ENCODE measurements at regions of chr6 and their contacts with region 1.

Region 1: DNA sequence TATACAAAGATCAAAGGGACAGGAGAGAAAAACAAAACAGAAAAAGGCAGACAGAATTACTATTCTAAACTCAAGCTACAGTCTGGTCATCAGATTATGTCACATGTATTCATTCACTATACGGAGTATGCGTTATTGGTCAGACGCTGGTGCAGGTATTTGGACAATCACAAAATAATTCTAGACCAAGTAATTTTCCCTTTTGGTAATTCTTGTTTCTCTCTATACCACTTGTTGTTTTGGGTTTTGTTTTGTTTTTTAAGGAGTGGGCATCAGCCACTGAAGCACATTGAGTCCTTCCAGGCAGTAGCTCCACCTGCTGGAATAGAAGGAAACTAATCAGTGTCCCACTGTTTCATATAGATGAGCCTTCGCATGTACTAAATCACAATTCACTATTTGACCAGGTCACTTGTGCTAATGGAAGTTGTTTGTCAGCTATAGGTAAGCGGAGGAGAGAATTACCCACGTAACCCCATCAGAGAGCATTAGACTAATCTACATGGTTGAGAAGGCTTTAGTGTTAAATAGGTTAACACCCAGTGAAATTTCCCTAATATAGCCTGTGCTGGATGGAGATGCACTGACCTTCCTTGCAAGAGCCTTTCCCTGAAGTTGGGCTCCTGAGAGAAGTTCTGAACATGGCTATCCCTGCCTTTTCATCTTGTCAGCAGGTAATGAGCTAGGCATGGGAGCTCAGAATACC is 77.9 kb downstream of the TNFAIP3 start:
- DNase-seq: peak; percentile 34
- H3K4me3 ChIP-seq: no peak overlapping the region
- H3K27ac ChIP-seq: no peak overlapping the region
- H3K4me1 ChIP-seq: peaks cover 12% of the 10 kb centered on the region
- H3K27me3 ChIP-seq: no peaks in the 10 kb centered on the region
- CTCF ChIP-seq: peak; percentile 68 to 81

Region 2: GRCh38 chr6:137707590-137708360 is 237.2 kb before region 1 on chr6:
- CTCF ChIA-PET with region 1: interaction called, 4 read pairs
- dilution Hi-C with region 1: no loop called
- in situ Hi-C with region 1: no loop called
- intact Hi-C with region 1: loop called (anchors 1 kb)
- DNase-seq: peak; percentile 92
- H3K4me3 ChIP-seq: no peak overlapping the region
- H3K27ac ChIP-seq: peak overlapping the region; percentile 64
- H3K4me1 ChIP-seq: peaks cover 7% of the 10 kb centered on the region
- H3K27me3 ChIP-seq: no peaks in the 10 kb centered on the region
- CTCF ChIP-seq: peak; percentile 65 to 75

Region 3: GRCh38 chr6:137845455-137845854 is 99.5 kb before region 1 on chr6:
- CTCF ChIA-PET with region 1: no interaction called
- dilution Hi-C with region 1: no loop called
- in situ Hi-C with region 1: no loop called
- intact Hi-C with region 1: loop called (anchors 1 kb)
- DNase-seq: no peak
- H3K4me3 ChIP-seq: no peak overlapping the region
- H3K27ac ChIP-seq: no peak overlapping the region
- H3K4me1 ChIP-seq: peaks cover 5% of the 10 kb centered on the region
- H3K27me3 ChIP-seq: no peaks in the 10 kb centered on the region
- CTCF ChIP-seq: peak in 1 of 2 donors; percentile 45

Region 4: DNA sequence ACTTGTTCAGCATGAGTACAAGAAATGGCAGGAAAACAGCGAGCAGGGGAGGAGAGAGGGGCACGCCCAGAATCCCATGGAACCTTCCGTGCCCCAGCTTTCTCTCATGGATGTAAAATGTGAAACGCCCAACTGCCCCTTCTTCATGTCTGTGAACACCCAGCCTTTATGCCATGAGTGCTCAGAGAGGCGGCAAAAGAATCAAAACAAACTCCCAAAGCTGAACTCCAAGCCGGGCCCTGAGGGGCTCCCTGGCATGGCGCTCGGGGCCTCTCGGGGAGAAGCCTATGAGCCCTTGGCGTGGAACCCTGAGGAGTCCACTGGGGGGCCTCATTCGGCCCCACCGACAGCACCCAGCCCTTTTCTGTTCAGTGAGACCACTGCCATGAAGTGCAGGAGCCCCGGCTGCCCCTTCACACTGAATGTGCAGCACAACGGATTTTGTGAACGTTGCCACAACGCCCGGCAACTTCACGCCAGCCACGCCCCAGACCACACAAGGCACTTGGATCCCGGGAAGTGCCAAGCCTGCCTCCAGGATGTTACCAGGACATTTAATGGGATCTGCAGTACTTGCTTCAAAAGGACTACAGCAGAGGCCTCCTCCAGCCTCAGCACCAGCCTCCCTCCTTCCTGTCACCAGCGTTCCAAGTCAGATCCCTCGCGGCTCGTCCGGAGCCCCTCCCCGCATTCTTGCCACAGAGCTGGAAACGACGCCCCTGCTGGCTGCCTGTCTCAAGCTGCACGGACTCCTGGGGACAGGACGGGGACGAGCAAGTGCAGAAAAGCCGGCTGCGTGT is 66.3 kb before region 1 on chr6:
- CTCF ChIA-PET with region 1: no interaction called
- dilution Hi-C with region 1: loop called (anchors 5 kb)
- in situ Hi-C with region 1: loop called (anchors 5 kb)
- intact Hi-C with region 1: loop called (anchors 2 kb)
- DNase-seq: no peak
- H3K4me3 ChIP-seq: no peak overlapping the region
- H3K27ac ChIP-seq: no peak overlapping the region
- H3K4me1 ChIP-seq: peaks cover 16% of the 10 kb centered on the region
- H3K27me3 ChIP-seq: no peaks in the 10 kb centered on the region
- CTCF ChIP-seq: no peak

Region 5: GRCh38 chr6:137989664-137990063 is 44.7 kb after region 1 on chr6:
- CTCF ChIA-PET with region 1: no interaction called
- dilution Hi-C with region 1: loop called (anchors 5 kb)
- in situ Hi-C with region 1: no loop called
- intact Hi-C with region 1: no loop called
- DNase-seq: no peak
- H3K4me3 ChIP-seq: no peak overlapping the region
- H3K27ac ChIP-seq: no peak overlapping the region
- H3K4me1 ChIP-seq: no peaks in the 10 kb centered on the region
- H3K27me3 ChIP-seq: no peaks in the 10 kb centered on the region
- CTCF ChIP-seq: no peak

Region 6: DNA sequence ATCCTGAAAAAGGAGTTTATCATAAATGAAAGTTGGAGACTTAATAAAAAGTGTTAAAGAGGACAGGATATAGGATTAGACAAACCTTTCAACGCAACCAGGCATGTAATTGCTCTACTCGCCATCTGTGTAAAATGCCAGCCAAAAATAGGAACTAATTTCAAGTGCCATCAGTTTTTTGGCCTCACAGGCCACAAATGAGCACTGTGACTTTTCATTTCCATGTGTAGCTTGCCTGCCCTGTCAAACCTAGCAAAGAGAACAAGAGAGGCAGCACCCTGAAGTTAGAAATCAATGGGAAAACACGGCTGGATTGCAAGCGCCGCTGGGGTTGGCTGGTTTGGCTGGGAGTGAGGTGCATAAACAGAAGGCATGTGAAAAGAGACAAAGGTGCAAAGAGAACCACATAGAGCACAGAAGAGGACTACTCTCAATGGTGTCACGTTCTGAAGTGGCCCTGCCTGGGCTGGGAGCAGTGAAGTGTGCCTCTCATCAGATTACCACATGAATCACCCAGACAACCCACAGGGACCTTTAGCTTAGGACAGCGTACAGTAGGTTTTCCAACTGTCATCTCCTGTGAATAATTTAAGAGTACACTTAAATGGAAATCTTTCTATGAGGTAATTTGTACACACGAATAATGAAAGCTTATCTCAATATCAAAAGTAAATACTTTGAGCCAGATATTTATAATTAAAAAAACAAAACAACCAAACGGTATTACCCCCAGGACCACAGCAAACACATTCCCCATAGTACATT is 632.4 kb after region 1 on chr6:
- CTCF ChIA-PET with region 1: no interaction called
- dilution Hi-C with region 1: no loop called
- in situ Hi-C with region 1: no loop called
- intact Hi-C with region 1: no loop called
- DNase-seq: no peak
- H3K4me3 ChIP-seq: no peak overlapping the region
- H3K27ac ChIP-seq: no peak overlapping the region
- H3K4me1 ChIP-seq: peaks cover 4% of the 10 kb centered on the region
- H3K27me3 ChIP-seq: no peaks in the 10 kb centered on the region
- CTCF ChIP-seq: no peak